ENCODE measurements at regions of chr6 and their contacts with region 1.

Region 1: GRCh38 chr6:149499066-149499465 is 14.3 kb upstream of the ZC3H12D start:
- DNase-seq: no peak
- ATAC-seq: peak in 6 of 8 donors; percentile 29 to 67 (median 44)
- H3K4me3 ChIP-seq: no peak overlapping the region
- H3K27ac ChIP-seq: peak overlapping the region in 1 of 10 donors; percentile 4
- H3K4me1 ChIP-seq: peaks cover 0 to 15% (median 4%) of the 10 kb centered on the region in 9 donors
- H3K27me3 ChIP-seq: no peaks in the 10 kb centered on the region
- CTCF ChIP-seq: no peak

Region 2: DNA sequence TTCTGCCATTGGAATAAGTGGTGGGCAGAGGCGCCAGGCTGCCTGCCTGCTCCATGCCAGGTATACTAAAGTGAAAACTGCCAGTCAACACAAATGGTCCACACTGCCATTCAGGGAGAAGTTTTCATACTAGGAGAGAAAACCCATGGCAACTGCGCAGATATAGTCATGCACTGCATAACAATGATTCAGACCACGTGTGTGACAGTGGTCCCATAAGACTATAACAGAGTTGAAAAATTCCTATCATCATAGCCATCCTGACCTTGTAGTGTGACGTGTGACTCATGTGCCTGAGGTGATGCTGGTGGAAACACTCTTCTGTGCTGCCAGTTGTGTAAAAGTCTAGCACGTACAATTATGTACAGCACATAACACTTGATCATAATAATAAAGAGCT is 39.3 kb before region 1 on chr6:
- intact Hi-C with region 1: loop called in 1 of 10 experiments (anchors 5 kb)
- DNase-seq: no peak
- ATAC-seq: no peak
- H3K4me3 ChIP-seq: no peak overlapping the region
- H3K27ac ChIP-seq: no peak overlapping the region
- H3K4me1 ChIP-seq: peaks cover 8 to 34% (median 27%) of the 10 kb centered on the region in 9 donors
- H3K27me3 ChIP-seq: peaks cover 0 to 31% (median 19%) of the 10 kb centered on the region in 7 donors
- CTCF ChIP-seq: no peak